ENCODE measurements at regions of chr3 and their contacts with region 1.

Region 1: GRCh38 chr3:115146431-115147328 is at the start of gene ZBTB20:
- DNase-seq: no peak
- ATAC-seq: peak; percentile 42
- H3K4me3 ChIP-seq: peak within 1 kb of the TSS; percentile 74 to 87
- H3K27ac ChIP-seq: peak within 1 kb of the TSS; percentile 93
- H3K4me1 ChIP-seq: peaks cover 10% of the 10 kb centered on the region; the same call in 1 of the 2 replicates
- H3K27me3 ChIP-seq: no peaks in the 10 kb centered on the region
- CTCF ChIP-seq: no peak
- total RNA-seq, gene ZBTB20: 4.1 TPM

Region 2: DNA sequence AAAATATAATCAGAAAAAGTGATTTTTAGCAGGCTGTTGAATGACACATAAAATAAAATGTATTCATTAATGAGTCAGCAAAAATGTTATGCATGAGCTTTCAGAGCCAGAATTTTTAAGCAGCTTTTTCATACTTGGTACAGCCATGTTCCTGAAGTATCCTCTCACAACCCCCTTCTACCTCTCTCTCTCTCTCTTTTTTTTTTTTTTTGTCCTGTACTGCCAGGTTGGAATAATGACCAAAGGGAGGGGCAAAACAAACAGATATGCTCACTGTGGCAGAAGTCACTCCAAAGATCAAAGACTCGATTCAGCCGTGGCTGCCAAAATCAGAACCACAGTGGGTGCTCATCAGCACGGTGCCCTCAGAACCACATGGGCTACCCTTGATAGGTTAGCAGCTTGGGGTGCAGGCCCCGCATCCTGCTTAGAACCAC is 382.6 kb before region 1 on chr3:
- CTCF ChIA-PET with region 1: no interaction called
- POLR2A ChIA-PET with region 1: interaction called, 10 read pairs
- in situ Hi-C with region 1: no loop called
- intact Hi-C with region 1: no loop called
- DNase-seq: no peak
- ATAC-seq: no peak
- H3K4me3 ChIP-seq: no peak overlapping the region
- H3K27ac ChIP-seq: no peak overlapping the region
- H3K4me1 ChIP-seq: no peaks in the 10 kb centered on the region
- H3K27me3 ChIP-seq: no peaks in the 10 kb centered on the region
- CTCF ChIP-seq: no peak

Region 3: GRCh38 chr3:116905794-116906193 is 1759.1 kb after region 1 on chr3:
- CTCF ChIA-PET with region 1: no interaction called
- POLR2A ChIA-PET with region 1: no interaction called
- in situ Hi-C with region 1: no loop called
- intact Hi-C with region 1: no loop called
- DNase-seq: no peak
- ATAC-seq: no peak
- H3K4me3 ChIP-seq: no peak overlapping the region
- H3K27ac ChIP-seq: no peak overlapping the region
- H3K4me1 ChIP-seq: no peaks in the 10 kb centered on the region
- H3K27me3 ChIP-seq: no peaks in the 10 kb centered on the region
- CTCF ChIP-seq: no peak

Measured in Panc1 (cell line).